Vagina (tissue), 2 donors: ENCODE measurements at regions of chr4 and their contacts with region 1.

Region 1: GRCh38 chr4:98995183-98996055 is at the start of gene METAP1:
- DNase-seq: peak in 1 of 2 donors; percentile 94
- H3K4me3 ChIP-seq: peak within 1 kb of the TSS; percentile 92 to 99
- H3K27ac ChIP-seq: peak within 1 kb of the TSS; percentile 93
- H3K4me1 ChIP-seq: peaks cover 30% of the 10 kb centered on the region
- H3K27me3 ChIP-seq: no peaks in the 10 kb centered on the region
- CTCF ChIP-seq: peak; percentile 32 to 68 (median 57)
- POLR2A ChIP-seq: peak in 1 of 2 donors; percentile 52
- total RNA-seq, gene METAP1: 32.4 TPM

Region 2: DNA sequence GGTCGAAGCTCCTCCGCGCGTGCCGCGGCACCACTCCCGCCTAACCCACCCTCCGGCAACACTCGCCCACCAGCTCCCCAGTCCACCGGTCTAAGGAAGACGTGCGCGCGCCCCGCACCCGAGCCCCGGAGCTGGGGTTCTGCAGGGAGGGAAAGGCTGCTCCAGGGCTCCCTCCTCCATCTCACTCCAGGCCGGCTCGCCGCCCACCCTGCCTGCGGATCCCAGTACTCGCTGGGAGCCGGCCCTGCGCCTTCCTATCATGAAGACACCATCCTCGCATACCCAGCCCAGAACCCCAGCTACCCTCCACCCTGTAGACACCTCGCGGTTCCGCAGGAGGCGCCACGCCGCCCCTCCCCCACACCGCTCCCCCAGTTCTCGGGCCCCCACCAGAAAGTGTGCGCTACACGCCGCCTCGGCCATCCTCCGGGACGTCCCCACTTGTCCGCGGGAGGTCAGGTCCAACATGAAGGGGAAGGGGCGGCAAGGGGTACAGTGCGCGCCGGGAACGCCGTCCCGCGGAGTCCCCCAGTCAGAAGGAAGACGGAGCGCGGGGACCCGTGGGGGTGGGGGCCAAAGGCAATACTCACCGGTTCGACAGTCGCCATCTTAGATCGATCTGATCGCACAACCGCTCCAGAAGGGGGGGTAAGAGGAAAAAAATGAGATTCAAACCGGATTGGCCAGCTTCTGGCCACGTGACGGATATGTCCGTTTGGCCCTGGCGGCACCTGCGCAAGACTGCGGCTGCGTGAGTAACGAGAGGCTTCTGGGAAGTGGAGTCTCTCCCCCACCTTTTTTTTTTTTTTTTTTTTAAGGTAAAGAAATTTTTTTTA is 66.7 kb before region 1 on chr4 and contains the start of gene EIF4E:
- intact Hi-C with region 1: loop called (anchors 5 kb)
- DNase-seq: peak; percentile 97 to 99
- H3K4me3 ChIP-seq: peak within 1 kb of the TSS; percentile 93 to 98
- H3K27ac ChIP-seq: peak within 1 kb of the TSS; percentile 98
- H3K4me1 ChIP-seq: peaks cover 25% of the 10 kb centered on the region
- H3K27me3 ChIP-seq: no peaks in the 10 kb centered on the region
- CTCF ChIP-seq: peak in 1 of 3 experiments; percentile 24
- POLR2A ChIP-seq: peak in 1 of 2 donors; percentile 42
- total RNA-seq, gene EIF4E: 61.6 TPM